GM18951 (cell line): ENCODE measurements at regions of chr14 and their contacts with region 1.

Region 1: GRCh38 chr14:24431569-24432258 is 2.0 kb downstream of the KHNYN start:
- POLR2A ChIP-seq: peak; percentile 23

Region 2: GRCh38 chr14:24150993-24151741 is 280.5 kb before region 1 on chr14:
- in situ Hi-C with region 1: no loop called
- POLR2A ChIP-seq: no peak

Region 3: GRCh38 chr14:24332268-24332993 is 99.3 kb before region 1 on chr14:
- in situ Hi-C with region 1: loop called (anchors 10 kb)
- POLR2A ChIP-seq: no peak

Region 4: DNA sequence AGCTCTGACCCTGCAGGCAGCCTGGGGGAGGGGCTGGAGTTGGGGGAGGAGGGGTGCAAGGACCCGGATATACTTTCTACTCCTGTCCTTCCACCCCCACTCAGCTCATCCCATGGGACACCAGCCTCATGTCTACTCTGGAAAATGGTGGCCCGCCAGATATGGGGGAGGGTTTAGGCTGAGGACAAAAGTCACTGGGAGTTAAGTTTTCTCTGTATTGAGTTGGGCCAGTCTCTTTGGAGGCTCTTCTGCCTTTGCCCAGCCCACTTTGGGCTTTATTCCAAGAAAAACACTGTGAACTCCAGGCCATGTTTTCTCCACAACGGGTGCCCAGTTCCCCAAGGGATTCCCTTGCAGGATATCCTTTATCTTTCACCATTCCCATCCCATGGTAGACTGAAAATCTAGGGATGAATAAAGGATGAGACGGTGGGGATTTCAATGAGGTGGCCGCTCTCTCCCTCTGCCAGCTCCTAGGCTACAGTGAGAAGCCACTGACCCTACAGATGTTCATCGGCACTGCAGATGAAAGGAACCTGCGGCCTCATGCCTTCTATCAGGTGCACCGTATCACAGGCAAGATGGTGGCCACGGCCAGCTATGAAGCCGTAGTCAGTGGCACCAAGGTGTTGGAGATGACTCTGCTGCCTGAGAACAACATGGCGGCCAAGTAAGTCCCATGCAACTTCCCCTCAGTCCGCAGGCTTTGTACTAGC is 58.9 kb before region 1 on chr14:
- in situ Hi-C with region 1: loop called (anchors 10 kb)
- POLR2A ChIP-seq: no peak

Region 5: GRCh38 chr14:24387009-24387345 is 44.7 kb before region 1 on chr14:
- in situ Hi-C with region 1: no loop called
- POLR2A ChIP-seq: no peak

Region 6: DNA sequence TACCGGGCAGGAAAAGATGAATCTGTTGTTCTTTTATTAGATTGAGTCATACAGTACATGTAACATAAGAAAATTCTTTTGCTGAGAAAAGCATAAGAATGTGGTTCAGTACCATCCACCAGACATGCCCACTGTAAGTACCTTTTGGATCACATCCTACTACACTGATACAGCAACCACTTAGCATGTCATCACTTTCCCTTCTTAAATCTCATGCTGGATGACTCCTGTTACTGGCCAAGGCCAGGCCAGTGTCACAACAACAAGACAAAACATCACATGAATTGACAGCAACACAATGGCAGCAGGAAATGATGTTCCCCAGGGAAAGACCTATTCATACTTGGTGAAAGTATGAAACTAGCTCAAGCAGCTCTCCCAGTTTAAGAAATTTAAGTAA is 571.8 kb after region 1 on chr14:
- in situ Hi-C with region 1: no loop called
- POLR2A ChIP-seq: no peak